Activated CD4-positive, alpha-beta memory T cell treated with anti-CD3 and anti-CD28 coated beads, Interleukin-2, amount 10 ng/mL, durations not matched to agents 7 days and 5 days (primary cell): ENCODE measurements at regions of chr1 and their contacts with region 1.

Region 1: DNA sequence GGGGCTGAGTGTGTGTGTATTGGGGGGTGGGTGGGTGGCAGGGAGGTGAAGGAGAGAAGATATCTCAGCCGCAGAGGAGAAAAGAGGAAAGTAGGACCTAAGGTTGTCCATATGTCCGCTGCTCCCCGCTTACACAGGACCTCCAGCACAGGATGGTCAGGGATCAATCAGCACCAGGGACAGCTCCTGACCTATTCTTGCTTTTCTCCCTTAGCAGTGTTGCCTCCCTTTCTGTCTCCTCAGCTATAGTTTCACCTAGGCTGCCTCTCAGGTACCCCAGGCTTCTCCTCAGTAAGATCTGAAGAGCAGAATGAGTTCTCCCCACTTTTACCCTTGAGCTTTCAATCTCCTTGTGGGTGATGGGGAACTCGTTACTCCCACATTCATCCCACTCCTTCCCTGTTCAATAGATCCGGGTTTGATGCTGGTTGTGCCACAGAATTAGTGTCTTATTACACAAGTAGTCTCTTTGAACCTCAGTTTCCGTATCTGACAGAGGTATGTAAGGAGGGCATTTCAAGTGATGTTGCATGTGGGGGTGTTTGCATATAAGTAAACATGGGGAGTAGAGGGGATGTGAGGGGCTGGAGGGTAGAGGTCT is 1.4 kb upstream of the DPH2 start:
- DNase-seq: peak; percentile 44
- H3K4me3 Mint-ChIP-seq: no peak overlapping the region
- H3K27ac Mint-ChIP-seq: no peak overlapping the region
- H3K4me1 Mint-ChIP-seq: peaks cover 29% of the 10 kb centered on the region
- H3K27me3 Mint-ChIP-seq: no peaks in the 10 kb centered on the region

Region 2: DNA sequence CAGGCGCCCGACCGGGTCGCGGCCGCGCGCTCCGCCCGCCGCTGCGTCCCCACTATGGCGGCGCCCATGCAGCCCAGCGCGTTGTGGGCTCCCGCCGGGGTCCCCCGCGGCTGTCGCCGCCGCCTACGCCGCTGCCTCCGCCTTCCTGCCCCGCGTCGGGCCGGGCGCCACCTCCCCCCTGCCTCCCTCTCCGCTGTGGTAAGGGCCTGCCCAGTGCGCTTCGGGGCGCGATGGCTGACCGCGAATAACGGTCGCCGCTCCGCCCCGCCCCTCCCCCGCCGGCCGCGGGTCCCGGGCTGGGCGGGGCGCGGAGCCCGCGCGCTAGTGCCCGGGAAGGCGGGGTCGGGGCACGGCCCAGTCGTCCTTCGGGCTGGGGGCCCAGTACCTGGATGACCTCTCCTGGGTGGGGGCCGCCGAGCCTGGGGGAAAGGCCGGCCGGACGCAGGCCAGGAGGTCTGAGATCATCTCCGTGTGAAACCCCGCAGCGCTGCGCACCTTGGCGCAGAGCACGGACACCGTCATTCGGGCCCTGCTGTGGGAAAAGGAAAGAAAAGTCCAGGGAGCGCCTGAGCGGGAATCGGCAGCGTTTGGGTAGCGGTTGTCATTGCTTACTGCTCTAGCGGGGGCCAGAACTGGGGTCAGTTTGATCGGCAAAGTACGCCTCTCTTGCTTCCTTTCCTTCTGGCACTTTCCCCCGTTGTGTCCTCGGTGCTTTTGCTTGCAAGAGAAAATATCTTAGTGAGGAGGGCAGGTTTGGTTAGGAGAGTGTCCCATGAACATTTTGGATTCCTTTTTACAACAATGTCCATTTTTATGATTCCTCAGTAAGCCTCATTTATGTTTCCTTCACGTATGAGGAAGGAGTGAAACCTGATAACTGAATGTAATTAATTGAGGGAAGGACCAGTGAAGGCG is 260.7 kb before region 1 on chr1 and contains the start of gene ST3GAL3:
- CTCF ChIA-PET with region 1: no interaction called
- POLR2A ChIA-PET with region 1: no interaction called
- DNase-seq: no peak
- H3K4me3 Mint-ChIP-seq: peak within 1 kb of the TSS; percentile 91
- H3K27ac Mint-ChIP-seq: peak within 1 kb of the TSS; percentile 81
- H3K4me1 Mint-ChIP-seq: peaks cover 46% of the 10 kb centered on the region
- H3K27me3 Mint-ChIP-seq: no peaks in the 10 kb centered on the region
- total RNA-seq, gene ST3GAL3: 14.2 to 16.9 TPM

Region 3: DNA sequence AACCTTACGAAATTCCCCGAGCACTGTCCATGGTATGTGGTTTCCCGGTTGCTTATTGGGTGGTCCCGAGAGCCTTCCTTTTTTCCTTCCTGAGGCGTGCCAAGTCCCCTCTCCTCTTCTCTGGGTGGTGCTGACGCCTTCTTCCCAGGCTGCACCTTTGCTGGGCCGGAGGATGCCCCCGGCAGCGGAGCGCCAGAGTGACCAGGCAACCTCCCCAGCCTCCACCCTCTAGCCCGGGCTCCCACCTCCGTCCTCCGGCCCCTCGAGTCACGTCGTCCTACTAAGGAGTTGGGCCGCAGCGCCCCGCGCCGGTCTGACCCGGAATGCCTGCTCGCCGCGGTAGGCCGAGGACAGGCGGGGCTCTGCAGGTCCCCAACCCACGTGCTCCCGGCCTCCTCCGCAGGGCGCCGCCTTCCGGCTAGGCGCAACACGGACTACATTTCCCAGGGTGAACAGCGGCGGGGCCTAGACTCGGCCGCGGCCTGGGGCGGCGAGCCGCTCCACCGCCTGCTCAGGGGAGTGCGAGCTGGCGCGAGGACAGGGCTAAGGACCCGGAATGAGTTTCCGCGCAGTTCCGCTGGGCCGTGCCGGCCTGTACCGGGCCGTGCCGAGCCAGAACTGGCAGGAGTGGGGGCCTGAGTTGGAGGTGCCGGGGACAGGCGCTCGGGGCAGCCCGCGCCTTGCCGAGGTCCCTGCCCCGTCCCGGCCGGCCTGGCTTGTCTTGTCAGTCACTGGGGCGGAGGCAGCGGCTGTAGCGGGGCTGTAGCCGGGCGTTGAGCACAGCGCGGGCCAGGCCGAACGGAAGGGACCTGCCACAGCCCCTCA is 22.0 kb before region 1 on chr1 and contains the start of gene IPO13:
- CTCF ChIA-PET with region 1: interaction called, 6 read pairs
- POLR2A ChIA-PET with region 1: interaction called, 20 read pairs
- DNase-seq: peak; percentile 96
- H3K4me3 Mint-ChIP-seq: peak within 1 kb of the TSS; percentile 89
- H3K27ac Mint-ChIP-seq: peak within 1 kb of the TSS; percentile 88
- H3K4me1 Mint-ChIP-seq: peaks cover 44% of the 10 kb centered on the region
- H3K27me3 Mint-ChIP-seq: no peaks in the 10 kb centered on the region
- total RNA-seq, gene IPO13: 21.5 to 23.5 TPM